Aorta (tissue), 5 donors: ENCODE measurements at regions of chr16 and their contacts with region 1.

Region 1: GRCh38 chr16:48542020-48542473 is 67.9 kb downstream of the N4BP1 start:
- DNase-seq: peak in 1 of 2 donors; percentile 88
- ATAC-seq: peak; percentile 80
- H3K4me3 ChIP-seq: no peak overlapping the region
- H3K27ac ChIP-seq: no peak overlapping the region
- H3K4me1 ChIP-seq: no peaks in the 10 kb centered on the region
- H3K27me3 ChIP-seq: no peaks in the 10 kb centered on the region

Region 2: GRCh38 chr16:48276102-48276501 is 265.9 kb before region 1 on chr16:
- intact Hi-C with region 1: loop called in 1 of 2 experiments (anchors 10 kb)
- DNase-seq: no peak
- ATAC-seq: no peak
- H3K4me3 ChIP-seq: no peak overlapping the region
- H3K27ac ChIP-seq: no peak overlapping the region
- H3K4me1 ChIP-seq: peaks cover 0 to 5% of the 10 kb centered on the region in 2 donors
- H3K27me3 ChIP-seq: no peaks in the 10 kb centered on the region

Region 3: DNA sequence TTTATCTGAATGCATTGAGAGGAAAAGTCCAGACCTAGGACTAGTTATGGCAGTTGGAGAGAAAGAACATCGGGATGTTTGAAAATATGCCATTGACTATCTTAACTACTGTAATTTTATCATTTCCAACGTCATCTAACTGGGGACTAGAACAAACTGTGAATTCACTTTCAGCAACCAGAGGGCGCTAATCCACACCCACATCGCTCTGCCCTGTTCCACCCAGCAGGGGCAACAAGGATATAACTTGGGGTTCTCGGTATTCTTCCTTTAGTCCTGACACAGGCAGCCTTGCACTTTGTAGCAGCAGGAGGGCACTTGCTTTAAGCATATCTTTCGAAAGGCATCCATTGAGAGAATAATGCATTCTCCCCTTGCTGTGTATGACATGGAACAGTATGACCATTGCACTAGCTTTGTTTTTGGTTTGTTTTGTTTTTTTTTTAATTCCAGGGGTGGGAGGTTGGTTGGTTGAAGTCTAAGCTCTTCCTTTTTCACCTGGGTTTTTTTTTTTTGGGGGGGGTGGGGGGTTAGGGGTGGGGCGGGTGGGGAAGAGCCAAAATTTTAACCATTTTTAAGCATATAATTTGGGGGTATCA is 188.4 kb before region 1 on chr16:
- intact Hi-C with region 1: loop called (anchors 5 kb)
- DNase-seq: peak in 1 of 2 donors; percentile 60
- ATAC-seq: peak; percentile 87
- H3K4me3 ChIP-seq: no peak overlapping the region
- H3K27ac ChIP-seq: no peak overlapping the region
- H3K4me1 ChIP-seq: peaks cover 0 to 2% of the 10 kb centered on the region in 2 donors
- H3K27me3 ChIP-seq: no peaks in the 10 kb centered on the region

Region 4: GRCh38 chr16:48365581-48366164 is 176.4 kb before region 1 on chr16:
- intact Hi-C with region 1: loop called in 1 of 2 experiments (anchors 5 kb)
- DNase-seq: peak; percentile 95 to 97
- ATAC-seq: peak; percentile 97
- H3K4me3 ChIP-seq: peak overlapping the region; percentile 43 to 67
- H3K27ac ChIP-seq: peak overlapping the region; percentile 19 to 31
- H3K4me1 ChIP-seq: peaks cover 0 to 6% of the 10 kb centered on the region in 2 donors
- H3K27me3 ChIP-seq: no peaks in the 10 kb centered on the region

Region 5: GRCh38 chr16:48499923-48500381 is 42.1 kb before region 1 on chr16:
- intact Hi-C with region 1: no loop called
- DNase-seq: peak; percentile 43 to 62
- ATAC-seq: peak; percentile 81
- H3K4me3 ChIP-seq: no peak overlapping the region
- H3K27ac ChIP-seq: no peak overlapping the region
- H3K4me1 ChIP-seq: no peaks in the 10 kb centered on the region
- H3K27me3 ChIP-seq: no peaks in the 10 kb centered on the region